AG04450 (cell line): ENCODE measurements at regions of chr1 and their contacts with region 1.

Region 1: GRCh38 chr1:94463765-94464330 is 45.7 kb downstream of the ABCD3 start:
- DNase-seq: peak; percentile 21
- H3K4me3 ChIP-seq: no peak overlapping the region
- H3K27ac ChIP-seq: no peak overlapping the region
- H3K27me3 ChIP-seq: no peaks in the 10 kb centered on the region
- CTCF ChIP-seq: peak; percentile 71

Region 2: DNA sequence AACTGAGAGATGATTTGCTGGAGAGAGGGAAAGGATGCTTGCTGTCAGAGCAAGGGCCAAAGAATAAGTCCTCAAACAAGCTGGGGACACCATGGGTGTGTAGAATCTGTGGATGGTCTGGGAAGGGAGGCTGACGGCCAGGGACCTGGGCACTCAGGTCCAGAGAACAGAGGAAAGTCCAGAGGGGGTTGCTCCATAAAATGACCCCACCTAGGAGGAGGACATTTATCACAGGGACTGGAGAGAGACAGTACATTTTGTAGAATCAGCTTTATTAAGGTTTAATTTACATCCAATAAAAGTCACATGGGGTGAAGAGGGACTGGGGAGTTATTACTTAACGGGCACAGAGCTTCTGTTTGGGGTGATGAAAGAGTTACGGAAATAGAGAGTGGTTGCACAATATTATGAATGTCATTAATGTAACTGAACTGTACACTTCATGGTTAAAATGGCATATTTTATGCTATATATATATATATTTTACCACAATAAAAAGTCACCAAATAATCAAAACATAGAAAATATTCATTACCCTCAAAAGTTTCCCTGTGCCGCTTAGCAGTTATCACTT is 118.6 kb before region 1 on chr1:
- CTCF ChIA-PET with region 1: interaction called, 12 read pairs
- POLR2A ChIA-PET with region 1: no interaction called
- DNase-seq: no peak
- H3K4me3 ChIP-seq: no peak overlapping the region
- H3K27ac ChIP-seq: no peak overlapping the region
- H3K27me3 ChIP-seq: peaks cover 24% of the 10 kb centered on the region
- CTCF ChIP-seq: no peak

Region 3: DNA sequence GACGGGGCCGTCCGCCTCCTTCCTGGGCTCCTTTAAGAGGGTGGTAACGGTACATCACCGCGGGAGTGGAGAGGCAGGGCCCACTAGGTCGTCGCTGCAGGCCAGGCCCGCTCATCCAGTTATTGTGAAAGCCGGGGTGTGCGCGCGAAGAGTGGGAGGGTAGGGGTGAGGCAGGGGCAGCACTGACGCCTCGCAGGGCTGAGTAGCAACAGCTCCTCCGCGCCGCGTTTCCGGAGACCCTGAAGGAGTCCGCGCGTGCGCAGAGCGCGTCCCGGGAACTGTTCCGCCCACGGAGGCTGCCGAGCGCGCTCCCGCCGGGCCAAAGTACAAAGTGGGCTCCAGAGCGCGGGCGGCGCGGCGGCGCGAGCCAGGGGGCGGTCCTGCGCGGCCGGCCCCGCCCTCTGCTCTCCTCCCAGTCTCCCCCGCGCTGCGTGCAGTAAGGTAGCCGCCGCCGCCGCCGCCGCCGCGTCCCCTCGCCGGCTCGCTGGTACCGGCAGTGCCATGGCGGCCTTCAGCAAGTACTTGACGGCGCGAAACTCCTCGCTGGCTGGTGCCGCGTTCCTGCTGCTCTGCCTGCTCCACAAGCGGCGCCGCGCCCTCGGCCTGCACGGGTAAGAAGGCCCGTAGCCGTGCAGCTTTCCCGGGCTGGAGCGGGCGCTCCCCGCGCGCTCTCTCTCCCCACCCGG is 45.7 kb before region 1 on chr1 and contains the start of gene ABCD3:
- CTCF ChIA-PET with region 1: interaction called, 27 read pairs
- POLR2A ChIA-PET with region 1: no interaction called
- DNase-seq: peak; percentile 97
- H3K4me3 ChIP-seq: peak within 1 kb of the TSS; percentile 82
- H3K27ac ChIP-seq: peak within 1 kb of the TSS; percentile 87
- H3K27me3 ChIP-seq: no peaks in the 10 kb centered on the region
- CTCF ChIP-seq: no peak
- polyA plus RNA-seq, gene ABCD3: 25.0 and 34.0 TPM in 2 replicates

Region 4: GRCh38 chr1:94440088-94440487 is 23.8 kb before region 1 on chr1:
- CTCF ChIA-PET with region 1: interaction called, 16 read pairs
- POLR2A ChIA-PET with region 1: no interaction called
- DNase-seq: no peak
- H3K4me3 ChIP-seq: no peak overlapping the region
- H3K27ac ChIP-seq: no peak overlapping the region
- H3K27me3 ChIP-seq: no peaks in the 10 kb centered on the region
- CTCF ChIP-seq: no peak